IMR-90 (cell line): ENCODE measurements at regions of chr4 and their contacts with region 1.

Region 1: GRCh38 chr4:55546756-55547465 is at the start of gene CLOCK:
- DNase-seq: peak; percentile 85
- ATAC-seq: peak; percentile 82
- H3K4me3 ChIP-seq: peak within 1 kb of the TSS; percentile 62
- H3K27ac ChIP-seq: peak within 1 kb of the TSS; percentile 75
- H3K4me1 ChIP-seq: peaks cover 5% of the 10 kb centered on the region; the same call in 1 of the 2 replicates
- H3K27me3 ChIP-seq: no peaks in the 10 kb centered on the region
- CTCF ChIP-seq: peak; percentile 44
- POLR2A ChIP-seq: peak; percentile 54
- RAD21 ChIP-seq: no peak; the same call in 1 of the 2 replicates
- total RNA-seq, gene CLOCK: 51.4 and 53.4 TPM in 2 replicates

Region 2: GRCh38 chr4:54277691-54278090 is 1269.2 kb before region 1 on chr4:
- CTCF ChIA-PET with region 1: no interaction called
- POLR2A ChIA-PET with region 1: no interaction called
- dilution Hi-C with region 1: no loop called
- in situ Hi-C with region 1: loop called (anchors 25 kb)
- intact Hi-C with region 1: no loop called
- DNase-seq: peak; percentile 92
- ATAC-seq: peak; percentile 25
- H3K4me3 ChIP-seq: no peak overlapping the region
- H3K27ac ChIP-seq: peak overlapping the region; percentile 60
- H3K4me1 ChIP-seq: peaks cover 17% of the 10 kb centered on the region
- H3K27me3 ChIP-seq: no peaks in the 10 kb centered on the region
- CTCF ChIP-seq: no peak
- POLR2A ChIP-seq: no peak
- RAD21 ChIP-seq: no peak; the same call in 1 of the 2 replicates

Region 3: GRCh38 chr4:55395529-55396307 is 151.2 kb before region 1 on chr4 and contains the start of gene TMEM165:
- CTCF ChIA-PET with region 1: no interaction called
- POLR2A ChIA-PET with region 1: no interaction called
- dilution Hi-C with region 1: no loop called
- in situ Hi-C with region 1: no loop called
- intact Hi-C with region 1: loop called (anchors 1 kb)
- DNase-seq: peak; percentile 79
- ATAC-seq: peak; percentile 92
- H3K4me3 ChIP-seq: peak within 1 kb of the TSS; percentile 99
- H3K27ac ChIP-seq: peak within 1 kb of the TSS; percentile 99
- H3K4me1 ChIP-seq: peaks cover 7% of the 10 kb centered on the region
- H3K27me3 ChIP-seq: no peaks in the 10 kb centered on the region
- CTCF ChIP-seq: no peak
- POLR2A ChIP-seq: peak; percentile 96
- RAD21 ChIP-seq: no peak; the same call in 1 of the 2 replicates
- total RNA-seq, gene TMEM165: 49.6 and 88.3 TPM in 2 replicates

Region 4: GRCh38 chr4:55491486-55491885 is 55.4 kb before region 1 on chr4:
- CTCF ChIA-PET with region 1: no interaction called
- POLR2A ChIA-PET with region 1: no interaction called
- dilution Hi-C with region 1: no loop called
- in situ Hi-C with region 1: no loop called
- intact Hi-C with region 1: loop called (anchors 10 kb)
- DNase-seq: peak; percentile 76
- ATAC-seq: peak; percentile 85
- H3K4me3 ChIP-seq: no peak overlapping the region
- H3K27ac ChIP-seq: no peak overlapping the region
- H3K4me1 ChIP-seq: peaks cover 7% of the 10 kb centered on the region
- H3K27me3 ChIP-seq: no peaks in the 10 kb centered on the region
- CTCF ChIP-seq: no peak
- POLR2A ChIP-seq: no peak
- RAD21 ChIP-seq: no peak